ENCODE measurements at regions of chr13 and their contacts with region 1.

Region 1: GRCh38 chr13:30408319-30409101 is 13.8 kb upstream of the UBE2L5 start:
- DNase-seq: peak; percentile 88
- H3K4me3 Mint-ChIP-seq: peak overlapping the region; percentile 72
- H3K27ac Mint-ChIP-seq: peak overlapping the region; percentile 79
- H3K4me1 Mint-ChIP-seq: peaks cover 36% of the 10 kb centered on the region
- H3K27me3 Mint-ChIP-seq: peaks cover 10% of the 10 kb centered on the region

Region 2: DNA sequence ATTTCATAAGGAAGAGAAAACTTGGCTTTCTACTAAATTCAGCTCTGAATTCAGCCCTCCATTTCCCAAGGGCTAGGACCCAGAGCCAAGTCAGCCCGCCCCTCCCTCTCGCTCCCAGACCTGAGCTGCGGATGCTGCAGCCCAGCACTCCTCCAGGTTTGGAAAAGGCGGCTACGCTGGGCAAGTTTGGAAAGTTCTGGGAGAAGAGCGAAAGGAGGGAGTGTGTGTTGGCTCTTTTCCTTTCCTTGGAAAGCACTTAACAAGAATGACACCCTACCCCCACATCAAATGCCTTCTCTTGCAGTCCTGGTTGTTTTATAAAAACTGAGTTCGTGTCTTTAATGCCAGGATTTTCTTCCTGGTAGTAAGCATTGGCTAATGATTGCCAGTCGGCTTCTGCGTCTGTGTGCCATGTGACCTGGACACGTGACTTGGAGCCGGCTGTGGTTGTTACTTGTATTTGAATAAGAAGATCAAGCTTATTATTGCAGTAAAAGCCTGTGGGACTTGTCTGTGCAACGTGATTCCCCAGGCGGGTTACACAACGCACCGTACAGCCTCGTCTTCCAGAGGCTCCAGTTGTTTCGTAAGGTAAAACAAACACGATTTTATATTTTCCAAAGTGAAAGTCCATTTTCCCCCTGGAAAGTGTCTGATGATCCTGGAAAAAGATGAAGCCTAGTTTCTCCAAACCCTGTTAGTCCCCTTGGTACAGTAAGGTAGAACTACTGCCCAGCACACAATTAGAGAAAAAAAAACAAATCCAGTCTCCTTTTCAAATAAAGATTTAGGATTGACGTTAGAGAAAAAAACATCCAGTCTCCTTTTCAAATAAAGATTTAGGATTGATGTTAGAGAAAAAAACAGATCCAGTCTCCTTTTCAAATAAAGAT is 13.1 kb before region 1 on chr13:
- intact Hi-C with region 1: loop called (anchors 1 kb)
- DNase-seq: peak; percentile 52
- H3K4me3 Mint-ChIP-seq: peak overlapping the region; percentile 84
- H3K27ac Mint-ChIP-seq: peak overlapping the region; percentile 95
- H3K4me1 Mint-ChIP-seq: peaks cover 53% of the 10 kb centered on the region
- H3K27me3 Mint-ChIP-seq: no peaks in the 10 kb centered on the region

Region 3: GRCh38 chr13:30422054-30422839 is 13.7 kb after region 1 on chr13 and contains the start of gene UBE2L5:
- intact Hi-C with region 1: loop called (anchors 1 kb)
- DNase-seq: peak; percentile 75
- H3K4me3 Mint-ChIP-seq: peak within 1 kb of the TSS; percentile 88
- H3K27ac Mint-ChIP-seq: peak within 1 kb of the TSS; percentile 86
- H3K4me1 Mint-ChIP-seq: peaks cover 26% of the 10 kb centered on the region
- H3K27me3 Mint-ChIP-seq: peaks cover 4% of the 10 kb centered on the region
- total RNA-seq, gene UBE2L5: not detected in 2 replicates

Region 4: GRCh38 chr13:30429721-30430694 is 21.5 kb after region 1 on chr13:
- intact Hi-C with region 1: loop called (anchors 1 kb)
- DNase-seq: no peak
- H3K4me3 Mint-ChIP-seq: peak overlapping the region; percentile 75
- H3K27ac Mint-ChIP-seq: peak overlapping the region; percentile 97
- H3K4me1 Mint-ChIP-seq: peaks cover 29% of the 10 kb centered on the region
- H3K27me3 Mint-ChIP-seq: peaks cover 6% of the 10 kb centered on the region

Region 5: DNA sequence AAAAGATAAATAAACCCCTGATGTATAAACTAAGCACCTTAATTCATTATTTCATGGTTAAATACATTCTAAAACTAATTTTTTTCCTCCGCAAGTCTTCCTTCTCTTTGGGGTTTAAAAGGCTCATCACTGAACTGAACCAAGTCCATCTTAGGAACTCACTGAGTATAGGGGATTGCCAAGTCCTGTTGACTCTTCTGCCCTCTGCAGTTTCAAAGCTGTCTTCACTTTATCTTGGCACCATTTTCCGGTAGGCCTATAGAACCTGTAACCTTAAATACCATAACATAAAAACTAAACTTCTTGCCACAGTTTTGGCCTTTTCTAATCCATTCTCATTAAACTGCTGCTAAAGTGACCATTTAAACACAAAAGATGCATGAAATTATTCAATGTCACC is 142.7 kb after region 1 on chr13:
- intact Hi-C with region 1: loop called (anchors 1 kb)
- DNase-seq: no peak
- H3K4me3 Mint-ChIP-seq: no peak overlapping the region
- H3K27ac Mint-ChIP-seq: no peak overlapping the region
- H3K4me1 Mint-ChIP-seq: peaks cover 4% of the 10 kb centered on the region
- H3K27me3 Mint-ChIP-seq: peaks cover 10% of the 10 kb centered on the region

Region 6: DNA sequence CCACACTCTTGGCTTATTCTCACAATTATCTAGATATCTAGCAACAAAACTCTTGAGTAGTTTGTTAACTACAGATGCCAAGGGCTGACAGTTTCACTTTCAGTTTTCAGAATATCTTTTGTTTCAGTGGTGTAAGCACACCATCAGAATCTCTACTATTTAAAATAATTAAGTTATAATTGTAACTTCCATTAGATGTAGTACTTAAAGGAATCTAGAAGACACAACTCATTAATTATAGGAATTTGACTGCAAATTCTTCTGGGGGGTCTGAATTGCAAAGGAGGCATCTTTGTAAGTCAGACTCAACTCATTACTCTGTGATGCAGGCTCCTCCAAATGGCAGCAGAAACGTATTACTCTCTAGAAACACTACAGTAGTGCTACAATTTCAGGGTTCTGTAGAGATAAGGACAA is 164.4 kb after region 1 on chr13:
- intact Hi-C with region 1: loop called (anchors 5 kb)
- DNase-seq: no peak
- H3K4me3 Mint-ChIP-seq: peak overlapping the region; percentile 59
- H3K27ac Mint-ChIP-seq: no peak overlapping the region
- H3K4me1 Mint-ChIP-seq: peaks cover 44% of the 10 kb centered on the region
- H3K27me3 Mint-ChIP-seq: peaks cover 9% of the 10 kb centered on the region

Region 7: GRCh38 chr13:30802953-30803478 is 394.5 kb after region 1 on chr13:
- intact Hi-C with region 1: loop called (anchors 2 kb)
- DNase-seq: peak; percentile 69
- H3K4me3 Mint-ChIP-seq: peak overlapping the region; percentile 47
- H3K27ac Mint-ChIP-seq: no peak overlapping the region
- H3K4me1 Mint-ChIP-seq: peaks cover 28% of the 10 kb centered on the region
- H3K27me3 Mint-ChIP-seq: peaks cover 4% of the 10 kb centered on the region

Measured in activated T-helper 1 cell treated with anti-CD3 and anti-CD28 coated beads, Interleukin-12 subunit alpha, Interleukin-12 subunit beta, Interleukin-2, Interleukin-4 antibody, amounts not matched to agents 30 ng/mL and 10 ng/mL and 1 ng/mL, durations not matched to agents 14 hours and 24 hours and 36 hours (primary cell).